ENCODE measurements at regions of chr12 and their contacts with region 1.

Region 1: GRCh38 chr12:69052613-69053408 is 119.8 kb upstream of the CPM start:
- DNase-seq: peak in 1 of 9 donors; percentile 55
- ATAC-seq: no peak
- H3K4me3 ChIP-seq: no peak overlapping the region
- H3K4me3 Mint-ChIP-seq: no peak overlapping the region
- H3K27ac ChIP-seq: no peak overlapping the region
- H3K27ac Mint-ChIP-seq: no peak overlapping the region
- H3K4me1 ChIP-seq: no peaks in the 10 kb centered on the region
- H3K4me1 Mint-ChIP-seq: peaks cover 0 to 14% (median 0%) of the 10 kb centered on the region in 7 donors
- H3K27me3 ChIP-seq: no peaks in the 10 kb centered on the region
- H3K27me3 Mint-ChIP-seq: peaks cover 0 to 22% (median 5%) of the 10 kb centered on the region in 5 donors

Region 2: GRCh38 chr12:68831272-68831671 is 221.5 kb before region 1 on chr12:
- CTCF ChIA-PET with region 1: no interaction called
- POLR2A ChIA-PET with region 1: no interaction called
- intact Hi-C with region 1: no loop called
- DNase-seq: no peak
- ATAC-seq: no peak
- H3K4me3 ChIP-seq: no peak overlapping the region
- H3K4me3 Mint-ChIP-seq: no peak overlapping the region
- H3K27ac ChIP-seq: no peak overlapping the region
- H3K27ac Mint-ChIP-seq: peak overlapping the region in 1 of 9 donors; percentile 62
- H3K4me1 ChIP-seq: no peaks in the 10 kb centered on the region
- H3K4me1 Mint-ChIP-seq: peaks cover 8 to 25% (median 20%) of the 10 kb centered on the region in 7 donors
- H3K27me3 ChIP-seq: no peaks in the 10 kb centered on the region
- H3K27me3 Mint-ChIP-seq: no peaks in the 10 kb centered on the region

Region 3: DNA sequence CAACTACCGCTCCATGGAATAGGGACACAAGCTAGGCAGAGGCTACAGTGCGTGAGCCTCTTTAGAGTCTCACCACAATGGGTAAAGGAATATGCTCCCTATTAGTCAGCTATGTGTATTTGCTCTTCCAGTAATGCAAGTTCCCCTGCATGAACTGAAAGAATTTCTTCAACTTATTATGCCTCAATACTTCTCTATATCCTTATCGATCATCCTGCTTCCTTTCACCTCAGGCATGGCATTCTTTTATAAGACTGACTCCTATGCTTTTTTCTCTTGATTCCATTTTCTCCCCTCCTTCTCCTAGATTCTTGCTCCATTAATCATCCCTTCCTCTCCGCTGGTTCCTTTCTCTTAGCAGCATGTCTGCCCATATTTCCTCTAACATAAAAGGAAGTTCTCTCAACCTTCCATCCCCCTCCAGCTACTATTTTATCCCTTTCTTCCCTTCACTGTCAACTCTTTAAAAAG is 25.4 kb before region 1 on chr12:
- CTCF ChIA-PET with region 1: no interaction called
- POLR2A ChIA-PET with region 1: no interaction called
- intact Hi-C with region 1: loop called in 1 of 2 experiments (anchors 1 kb)
- DNase-seq: no peak
- ATAC-seq: no peak
- H3K4me3 ChIP-seq: no peak overlapping the region
- H3K4me3 Mint-ChIP-seq: no peak overlapping the region
- H3K27ac ChIP-seq: no peak overlapping the region
- H3K27ac Mint-ChIP-seq: no peak overlapping the region
- H3K4me1 ChIP-seq: no peaks in the 10 kb centered on the region
- H3K4me1 Mint-ChIP-seq: no peaks in the 10 kb centered on the region
- H3K27me3 ChIP-seq: no peaks in the 10 kb centered on the region
- H3K27me3 Mint-ChIP-seq: peaks cover 0 to 17% (median 4%) of the 10 kb centered on the region in 5 donors